Mammary epithelial cell (primary cell): ENCODE measurements at regions of chr16 and their contacts with region 1.

Region 1: GRCh38 chr16:72371307-72372086 is 199.5 kb upstream of the PMFBP1 start:
- DNase-seq: peak; percentile 16
- H3K4me3 ChIP-seq: no peak overlapping the region
- H3K27ac ChIP-seq: no peak overlapping the region
- H3K4me1 ChIP-seq: no peaks in the 10 kb centered on the region
- H3K27me3 ChIP-seq: no peaks in the 10 kb centered on the region
- CTCF ChIP-seq: no peak

Region 2: DNA sequence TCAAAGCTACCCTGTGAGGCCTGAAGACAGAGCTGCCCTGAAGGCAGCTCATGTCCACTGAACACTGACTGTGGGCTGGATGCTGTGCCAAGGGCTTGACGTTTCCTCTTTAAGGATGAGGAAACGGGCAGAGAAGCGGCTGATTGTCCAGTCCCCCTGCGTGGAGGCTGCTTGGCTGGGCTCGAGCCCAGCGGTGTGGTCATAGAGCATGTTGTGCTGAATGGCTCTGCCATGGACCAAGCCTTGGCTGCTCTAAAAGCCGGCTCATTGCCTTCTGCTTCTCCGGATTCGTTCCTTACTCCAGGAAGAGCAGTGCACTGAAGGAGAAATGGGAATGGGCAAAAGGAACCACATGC is 345.8 kb before region 1 on chr16:
- CTCF ChIA-PET with region 1: no interaction called
- dilution Hi-C with region 1: no loop called
- in situ Hi-C with region 1: no loop called
- intact Hi-C with region 1: no loop called
- DNase-seq: no peak
- H3K4me3 ChIP-seq: no peak overlapping the region
- H3K27ac ChIP-seq: no peak overlapping the region
- H3K4me1 ChIP-seq: no peaks in the 10 kb centered on the region
- H3K27me3 ChIP-seq: no peaks in the 10 kb centered on the region
- CTCF ChIP-seq: no peak

Region 3: DNA sequence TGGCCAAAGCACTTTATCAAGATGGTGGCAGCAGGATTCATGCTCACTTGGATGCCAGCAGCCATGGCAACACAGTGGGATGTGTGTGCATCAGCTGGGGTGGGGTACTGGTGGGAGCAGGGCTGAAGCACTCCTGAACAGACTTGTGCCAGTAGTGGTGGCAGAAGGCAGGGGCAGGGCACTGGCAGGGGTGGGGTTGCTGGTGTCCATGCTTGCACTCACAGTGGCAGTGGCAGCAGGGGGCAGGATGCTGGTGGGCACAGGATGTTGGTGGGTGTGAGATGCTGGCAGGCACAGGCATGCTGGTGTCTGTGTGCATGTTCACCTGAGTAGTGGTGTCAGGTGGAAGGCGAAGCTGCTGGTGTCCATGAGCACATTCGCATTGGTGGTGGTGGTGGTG is 38.6 kb before region 1 on chr16:
- CTCF ChIA-PET with region 1: no interaction called
- dilution Hi-C with region 1: loop called (anchors 5 kb)
- in situ Hi-C with region 1: no loop called
- intact Hi-C with region 1: no loop called
- DNase-seq: no peak
- H3K4me3 ChIP-seq: no peak overlapping the region
- H3K27ac ChIP-seq: no peak overlapping the region
- H3K4me1 ChIP-seq: no peaks in the 10 kb centered on the region
- H3K27me3 ChIP-seq: no peaks in the 10 kb centered on the region
- CTCF ChIP-seq: no peak